ENCODE measurements at regions of chr20 and their contacts with region 1.

Region 1: DNA sequence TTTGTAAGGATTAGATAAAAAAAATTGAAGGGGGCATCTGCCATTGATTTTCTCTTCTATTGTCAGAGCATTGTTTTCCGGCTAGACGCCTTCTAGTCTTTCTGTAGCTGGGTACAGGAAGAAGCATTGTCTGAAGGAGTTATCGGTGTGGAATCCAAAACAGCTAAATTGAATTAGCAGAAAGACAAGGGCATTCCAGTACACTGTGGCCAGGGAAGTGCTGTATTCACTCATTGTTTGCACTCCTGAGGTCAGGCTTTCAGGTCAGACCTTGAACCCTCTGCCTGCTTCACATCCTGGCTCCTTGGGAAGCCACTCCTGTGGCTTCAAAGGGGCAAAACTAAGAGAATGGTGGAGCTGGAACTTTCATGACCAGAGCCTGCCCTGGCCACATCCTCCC is 81.1 kb upstream of the SNAP25 start:
- DNase-seq: no peak

Region 2: DNA sequence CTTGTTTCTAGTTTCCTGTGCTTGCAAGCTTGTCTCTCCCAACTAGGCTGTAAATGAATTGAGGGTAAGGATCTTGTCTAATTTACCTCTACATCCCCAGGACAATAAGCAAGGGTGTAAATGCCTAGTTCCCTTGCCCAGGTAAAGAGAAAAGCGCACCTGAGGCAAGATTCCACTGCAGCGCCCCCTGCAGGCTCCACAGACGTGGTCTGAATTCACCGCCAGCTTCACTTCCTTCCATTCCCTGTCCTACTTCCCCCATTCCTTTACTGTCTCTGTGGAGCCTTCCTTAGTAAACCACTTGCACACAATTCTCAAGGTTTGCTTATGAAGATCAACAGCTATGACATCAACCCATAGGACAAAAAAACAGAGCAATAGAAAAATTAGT is 60.5 kb before region 1 on chr20:
- intact Hi-C with region 1: loop called (anchors 2 kb)
- DNase-seq: no peak

Region 3: DNA sequence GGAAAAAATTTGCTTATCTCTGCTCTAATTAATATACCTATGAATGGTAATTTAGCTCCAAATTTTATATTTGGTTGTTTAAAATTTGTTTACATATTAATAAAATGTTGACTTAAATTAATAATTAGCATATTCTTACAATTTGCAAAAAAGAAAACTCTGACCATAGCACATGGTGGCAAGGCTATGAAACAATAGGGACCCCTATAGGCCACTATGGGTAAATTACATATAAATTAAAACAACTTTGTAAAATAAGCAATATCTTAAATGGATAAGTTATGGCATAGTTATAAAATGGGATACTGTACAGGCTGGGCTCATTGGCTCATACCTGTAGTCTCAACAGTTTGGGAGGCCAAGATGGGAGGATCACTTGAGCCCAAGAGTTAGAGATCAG is 220.4 kb after region 1 on chr20:
- intact Hi-C with region 1: loop called (anchors 5 kb)
- DNase-seq: no peak

Measured in cardiac septum (tissue), 1 donor.